ENCODE measurements at regions of chr18 and their contacts with region 1.

Region 1: DNA sequence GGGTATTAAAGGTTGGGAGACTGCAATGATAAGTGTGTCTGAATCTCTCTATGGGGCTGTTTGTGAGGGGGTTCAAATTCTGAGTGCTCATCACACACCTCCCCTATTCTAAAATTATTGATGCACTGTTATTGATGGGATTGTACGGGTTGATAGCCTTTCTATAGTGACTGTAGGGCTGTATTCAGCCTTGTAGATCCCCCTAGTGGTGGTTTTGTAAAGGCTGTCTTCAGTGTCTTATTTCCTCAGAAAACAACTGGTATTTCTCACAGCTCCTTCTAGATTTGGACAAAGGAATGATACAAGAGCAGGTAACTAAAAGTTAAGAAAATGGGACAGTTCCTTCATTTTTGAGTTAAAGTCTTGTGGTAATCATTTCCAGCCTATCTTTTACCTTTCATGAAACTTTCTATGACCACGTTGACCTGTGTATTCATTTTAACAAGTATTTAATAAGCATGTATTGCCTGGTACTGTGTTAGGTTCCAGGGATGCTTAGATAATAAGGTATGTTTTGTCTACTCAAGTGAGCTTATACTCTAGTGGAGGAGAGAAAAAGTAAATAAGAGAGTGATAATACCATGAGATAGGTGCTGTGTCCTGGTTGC is 21.2 kb downstream of the SMAD4 start:
- DNase-seq: peak; percentile 41
- ATAC-seq: peak; percentile 90
- H3K4me3 Mint-ChIP-seq: no peak overlapping the region
- H3K27ac Mint-ChIP-seq: no peak overlapping the region
- H3K4me1 Mint-ChIP-seq: peaks cover 23% of the 10 kb centered on the region
- H3K27me3 Mint-ChIP-seq: no peaks in the 10 kb centered on the region

Region 2: GRCh38 chr18:51039138-51040112 is 11.8 kb before region 1 on chr18:
- CTCF ChIA-PET with region 1: interaction called, 41 read pairs
- POLR2A ChIA-PET with region 1: interaction called, 4 read pairs
- DNase-seq: no peak
- ATAC-seq: no peak
- H3K4me3 Mint-ChIP-seq: no peak overlapping the region
- H3K27ac Mint-ChIP-seq: no peak overlapping the region
- H3K4me1 Mint-ChIP-seq: peaks cover 48% of the 10 kb centered on the region
- H3K27me3 Mint-ChIP-seq: no peaks in the 10 kb centered on the region